HAP-1 (cell line): ENCODE measurements at regions of chr20 and their contacts with region 1.

Region 1: GRCh38 chr20:57391074-57391554 is at the start of gene RBM38:
- DNase-seq: peak; percentile 55 to 85
- H3K4me3 ChIP-seq: peak within 1 kb of the TSS; percentile 53
- H3K4me1 ChIP-seq: peaks cover 18% of the 10 kb centered on the region
- H3K27me3 ChIP-seq: no peaks in the 10 kb centered on the region

Region 2: DNA sequence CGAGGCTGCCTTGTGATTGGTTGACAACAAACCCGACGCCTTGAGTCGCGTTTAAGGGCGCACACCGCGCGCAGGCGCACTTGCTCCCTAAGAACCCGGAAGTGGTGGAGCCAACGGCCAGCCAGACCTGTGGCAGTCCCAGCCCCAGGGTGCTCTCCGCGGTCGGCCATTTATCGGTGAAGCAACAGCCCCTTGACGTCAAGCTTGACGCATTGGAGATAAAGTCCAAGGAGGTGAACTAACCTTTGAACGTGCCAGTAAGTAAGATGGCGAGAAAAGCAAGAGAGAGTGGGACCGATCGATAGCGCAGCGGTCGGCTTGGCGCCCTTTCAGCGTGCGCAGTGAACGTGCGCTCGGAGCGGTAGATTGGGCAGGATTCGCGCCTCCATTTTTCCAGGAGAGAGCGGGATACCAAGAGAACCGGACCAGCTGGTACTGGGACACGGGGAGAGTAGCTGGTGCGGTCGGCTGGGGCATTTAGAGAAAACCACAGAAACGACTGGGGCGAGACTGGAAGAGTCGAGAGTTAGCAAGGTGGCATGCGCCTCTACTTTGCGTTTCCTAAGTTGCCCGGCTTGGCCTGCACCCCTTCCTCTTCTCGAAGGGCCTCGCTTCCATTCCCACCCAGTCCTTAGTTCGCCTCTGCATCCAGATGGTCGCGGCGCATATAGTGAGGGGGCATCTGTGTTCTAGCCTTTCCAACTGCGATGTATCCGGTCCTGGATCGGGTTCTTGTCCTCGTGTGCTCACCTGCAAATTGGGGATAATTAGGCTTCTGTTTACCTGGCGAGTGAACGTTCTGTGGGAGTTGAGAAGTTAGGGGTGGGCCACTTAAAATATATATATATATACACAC is 998.6 kb before region 1 on chr20 and contains the start of gene CSTF1:
- in situ Hi-C with region 1: loop called (anchors 25 kb)
- DNase-seq: peak; percentile 97 to 99
- H3K4me3 ChIP-seq: peak within 1 kb of the TSS; percentile 84
- H3K4me1 ChIP-seq: peaks cover 7% of the 10 kb centered on the region; the same call in 1 of the 2 replicates
- H3K27me3 ChIP-seq: no peaks in the 10 kb centered on the region

Region 3: DNA sequence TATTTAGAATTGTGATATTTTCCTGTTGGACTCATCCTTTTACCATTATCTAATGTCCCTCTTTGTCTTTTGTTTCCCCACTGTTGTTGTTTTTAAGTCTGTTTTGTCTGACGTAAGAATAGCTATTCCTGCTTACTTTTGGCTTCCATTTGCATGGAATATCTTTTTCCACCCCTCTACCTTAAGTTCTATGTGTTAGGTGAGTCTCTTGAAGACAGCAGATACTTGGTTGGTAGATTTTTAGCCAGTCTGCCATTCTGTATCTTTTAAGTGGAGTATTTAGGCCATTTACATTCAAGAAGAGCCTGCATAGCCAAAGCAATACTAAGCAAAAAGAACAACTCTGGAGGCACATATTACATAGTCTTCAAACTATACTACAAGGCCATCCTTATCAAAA is 94.7 kb after region 1 on chr20:
- in situ Hi-C with region 1: no loop called
- DNase-seq: no peak
- H3K4me3 ChIP-seq: no peak overlapping the region
- H3K4me1 ChIP-seq: no peaks in the 10 kb centered on the region
- H3K27me3 ChIP-seq: 0 out of 2 replicates have a peak, but pooled peaks cover 3% of the 10 kb centered on the region

Region 4: DNA sequence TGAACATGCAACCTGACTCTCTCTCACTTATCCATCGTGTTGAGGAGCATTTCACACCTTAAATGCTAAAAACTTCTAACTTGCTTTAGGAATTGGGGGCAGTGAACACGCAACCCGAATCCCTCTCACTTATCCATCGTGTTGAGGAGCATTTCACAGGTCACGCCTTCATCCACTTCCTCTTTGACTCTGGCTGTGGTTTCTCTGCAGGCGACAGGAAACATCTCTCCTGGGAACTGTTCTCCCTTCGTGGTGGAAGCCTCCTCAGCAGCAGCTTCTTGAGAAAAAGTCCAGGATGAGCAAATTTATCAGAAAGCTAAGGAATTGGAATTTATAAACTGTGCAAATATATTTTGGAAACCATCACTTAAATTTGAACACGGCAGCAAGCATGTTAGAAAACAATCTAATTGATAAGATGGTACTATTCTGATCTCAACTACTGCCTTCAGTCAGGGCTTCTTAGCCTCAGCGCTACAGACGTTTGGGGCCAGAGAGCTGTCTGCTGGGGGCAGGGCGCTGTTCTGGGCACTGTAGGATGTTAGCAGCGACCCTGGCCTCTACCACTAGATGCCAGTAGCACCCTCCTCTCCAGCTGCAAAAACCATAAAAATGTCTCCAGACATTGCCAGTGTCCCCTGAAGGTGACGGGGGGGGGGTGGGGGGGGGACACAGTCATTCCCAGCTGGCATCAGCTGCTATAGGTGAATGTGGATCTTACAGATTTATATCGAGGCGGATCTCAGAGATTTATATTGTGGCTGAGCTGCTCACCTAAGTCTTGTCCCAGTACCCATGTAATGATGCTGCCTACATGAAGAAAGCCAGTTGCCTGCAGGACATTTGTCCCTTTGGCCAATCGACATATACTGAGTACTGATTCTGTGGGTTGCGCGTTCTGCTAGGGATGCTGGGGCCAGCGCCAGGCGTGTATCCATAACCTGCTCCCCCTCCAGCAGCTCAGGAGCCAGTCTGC is 107.6 kb after region 1 on chr20:
- in situ Hi-C with region 1: loop called (anchors 5 kb)
- DNase-seq: peak in 1 of 2 experiments; percentile 48
- H3K4me3 ChIP-seq: no peak overlapping the region
- H3K4me1 ChIP-seq: peaks cover 3% of the 10 kb centered on the region
- H3K27me3 ChIP-seq: peaks cover 8% of the 10 kb centered on the region

Region 5: GRCh38 chr20:57582432-57583305 is 191.6 kb after region 1 on chr20:
- in situ Hi-C with region 1: loop called (anchors 10 kb)
- DNase-seq: peak; percentile 27 to 61
- H3K4me3 ChIP-seq: no peak overlapping the region
- H3K4me1 ChIP-seq: peaks cover 2% of the 10 kb centered on the region; the same call in 1 of the 2 replicates
- H3K27me3 ChIP-seq: peaks cover 10% of the 10 kb centered on the region; the same call in 1 of the 2 replicates

Region 6: DNA sequence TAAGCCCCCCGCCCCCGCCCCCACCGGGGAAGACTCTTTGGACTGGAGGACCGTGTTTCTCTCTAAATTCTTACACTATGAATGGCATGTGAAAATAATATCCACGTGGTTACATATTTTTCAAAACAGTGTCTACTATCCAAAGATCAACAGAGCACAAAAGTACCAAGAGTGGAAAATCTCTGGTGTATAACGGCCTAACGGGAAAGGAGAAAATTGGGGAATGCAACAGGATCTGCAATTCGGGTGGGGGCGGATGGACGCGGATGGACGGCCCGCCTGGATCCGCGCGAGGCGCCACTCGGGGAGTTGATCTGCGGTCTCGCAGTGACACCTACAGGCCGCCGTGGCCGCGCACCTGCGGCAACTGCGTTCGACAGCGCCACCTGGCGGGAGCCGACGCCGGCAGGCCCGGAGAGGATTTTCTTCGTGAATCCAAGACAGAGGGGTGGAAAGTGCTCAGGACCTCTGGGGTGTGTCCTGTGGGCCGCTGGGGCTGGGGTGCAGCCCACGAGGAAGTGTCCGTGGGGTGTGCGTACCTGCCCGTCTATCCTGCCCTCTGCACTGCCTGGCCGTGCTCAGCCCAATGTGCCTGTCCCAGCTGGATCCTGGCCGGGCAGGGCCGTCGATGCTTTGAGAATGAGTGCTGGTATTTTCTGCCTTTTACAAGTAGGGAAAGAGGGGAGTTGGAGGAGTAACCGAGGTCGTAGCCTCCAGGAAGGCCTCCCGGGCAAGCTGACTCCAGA is 818.7 kb after region 1 on chr20:
- in situ Hi-C with region 1: loop called (anchors 25 kb)
- DNase-seq: peak; percentile 51 to 90
- H3K4me3 ChIP-seq: no peak overlapping the region
- H3K4me1 ChIP-seq: no peaks in the 10 kb centered on the region
- H3K27me3 ChIP-seq: peaks cover 5% of the 10 kb centered on the region; the same call in 1 of the 2 replicates